ENCODE measurements at regions of chr14 and their contacts with region 1.

Region 1: DNA sequence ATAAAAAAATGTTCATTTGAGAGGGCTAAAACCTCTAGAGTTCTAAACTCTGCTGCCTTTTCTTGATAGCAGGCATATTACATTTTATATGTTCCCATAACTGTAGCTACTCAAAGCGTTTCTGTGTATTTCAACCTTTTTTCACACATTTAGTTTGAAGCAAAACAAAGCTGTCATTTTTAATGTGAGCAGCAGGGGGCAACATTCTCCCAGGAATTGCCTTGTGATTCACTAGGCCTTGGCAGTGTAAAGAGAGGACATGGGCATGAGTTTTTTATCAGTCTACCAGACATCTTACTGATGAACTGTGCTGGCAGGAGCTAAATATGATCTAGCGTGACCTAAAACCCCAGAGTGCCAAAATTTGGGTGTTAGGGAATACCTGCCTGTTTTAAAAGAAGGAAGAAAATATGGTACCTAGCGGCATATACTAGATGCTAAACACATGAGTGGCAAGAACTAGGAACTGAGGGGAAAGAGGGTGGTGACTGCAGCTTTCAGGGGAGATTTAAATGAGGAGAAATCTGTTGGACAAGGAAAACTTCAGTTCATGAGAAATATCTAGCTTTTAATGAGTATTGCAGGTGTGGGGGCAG is 65.3 kb downstream of the IFT43 start:
- DNase-seq: peak; percentile 72
- ATAC-seq: peak; percentile 61
- H3K4me3 Mint-ChIP-seq: no peak overlapping the region
- H3K27ac Mint-ChIP-seq: no peak overlapping the region
- H3K4me1 Mint-ChIP-seq: no peaks in the 10 kb centered on the region
- H3K27me3 Mint-ChIP-seq: no peaks in the 10 kb centered on the region
- CTCF ChIP-seq: peak; percentile 82

Region 2: GRCh38 chr14:76034566-76034965 is 16.3 kb before region 1 on chr14:
- CTCF ChIA-PET with region 1: interaction called, 20 read pairs
- POLR2A ChIA-PET with region 1: no interaction called
- intact Hi-C with region 1: no loop called
- DNase-seq: no peak
- ATAC-seq: no peak
- H3K4me3 Mint-ChIP-seq: no peak overlapping the region
- H3K27ac Mint-ChIP-seq: no peak overlapping the region
- H3K4me1 Mint-ChIP-seq: no peaks in the 10 kb centered on the region
- H3K27me3 Mint-ChIP-seq: no peaks in the 10 kb centered on the region
- CTCF ChIP-seq: no peak

Region 3: GRCh38 chr14:76067536-76067935 is 16.6 kb after region 1 on chr14:
- CTCF ChIA-PET with region 1: interaction called, 15 read pairs
- POLR2A ChIA-PET with region 1: no interaction called
- intact Hi-C with region 1: no loop called
- DNase-seq: no peak
- ATAC-seq: no peak
- H3K4me3 Mint-ChIP-seq: no peak overlapping the region
- H3K27ac Mint-ChIP-seq: no peak overlapping the region
- H3K4me1 Mint-ChIP-seq: no peaks in the 10 kb centered on the region
- H3K27me3 Mint-ChIP-seq: no peaks in the 10 kb centered on the region
- CTCF ChIP-seq: no peak

Region 4: DNA sequence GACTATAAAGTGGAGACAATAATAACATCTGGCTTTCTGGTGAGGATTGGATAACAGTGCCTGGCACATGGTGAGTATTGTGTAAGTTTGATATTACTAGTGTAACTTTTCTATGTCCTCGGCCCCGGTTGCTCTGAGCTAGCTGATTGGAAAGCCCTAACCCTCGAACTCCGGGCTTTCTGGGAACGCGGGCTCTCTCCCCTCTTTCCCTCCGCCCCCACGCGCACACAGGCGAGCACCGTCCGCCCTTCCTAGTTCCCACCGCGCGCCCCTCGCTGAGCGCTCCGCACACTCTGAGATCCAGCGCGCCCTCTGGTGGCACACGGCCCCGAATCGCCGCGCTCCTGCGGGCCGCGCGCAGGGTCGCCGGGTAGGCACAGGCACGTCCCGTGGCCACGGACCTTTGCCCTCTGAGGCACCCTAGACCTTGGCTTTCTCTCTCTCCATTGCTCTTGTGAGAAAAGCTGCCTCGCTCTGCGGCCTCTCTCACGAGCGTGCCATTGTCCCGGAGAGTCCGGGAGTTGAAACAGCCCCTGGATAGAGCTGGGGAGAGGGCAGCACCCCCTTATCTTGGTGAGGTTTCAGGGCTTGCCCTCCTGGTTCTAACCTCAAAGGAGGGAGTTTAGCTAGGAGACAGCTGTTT is 301.9 kb after region 1 on chr14:
- CTCF ChIA-PET with region 1: interaction called, 108 read pairs
- POLR2A ChIA-PET with region 1: interaction called, 3 read pairs
- intact Hi-C with region 1: loop called (anchors 2 kb)
- DNase-seq: peak; percentile 72
- ATAC-seq: peak; percentile 86
- H3K4me3 Mint-ChIP-seq: no peak overlapping the region
- H3K27ac Mint-ChIP-seq: no peak overlapping the region
- H3K4me1 Mint-ChIP-seq: no peaks in the 10 kb centered on the region
- H3K27me3 Mint-ChIP-seq: peaks cover 17% of the 10 kb centered on the region
- CTCF ChIP-seq: peak; percentile 92

Region 5: GRCh38 chr14:76386915-76387782 is 336.3 kb after region 1 on chr14:
- CTCF ChIA-PET with region 1: interaction called, 38 read pairs
- POLR2A ChIA-PET with region 1: no interaction called
- intact Hi-C with region 1: loop called (anchors 10 kb)
- DNase-seq: peak; percentile 77
- ATAC-seq: peak; percentile 99
- H3K4me3 Mint-ChIP-seq: no peak overlapping the region
- H3K27ac Mint-ChIP-seq: no peak overlapping the region
- H3K4me1 Mint-ChIP-seq: no peaks in the 10 kb centered on the region
- H3K27me3 Mint-ChIP-seq: peaks cover 33% of the 10 kb centered on the region
- CTCF ChIP-seq: peak; percentile 92

Region 6: GRCh38 chr14:76647697-76648298 is 596.9 kb after region 1 on chr14:
- CTCF ChIA-PET with region 1: interaction called, 5 read pairs
- POLR2A ChIA-PET with region 1: no interaction called
- intact Hi-C with region 1: loop called (anchors 2 kb)
- DNase-seq: peak; percentile 26
- ATAC-seq: no peak
- H3K4me3 Mint-ChIP-seq: no peak overlapping the region
- H3K27ac Mint-ChIP-seq: no peak overlapping the region
- H3K4me1 Mint-ChIP-seq: no peaks in the 10 kb centered on the region
- H3K27me3 Mint-ChIP-seq: peaks cover 2% of the 10 kb centered on the region
- CTCF ChIP-seq: peak; percentile 85